Activated CD4-positive, alpha-beta memory T cell treated with anti-CD3 and anti-CD28 coated beads for 36 hours (primary cell): ENCODE measurements at regions of chr6 and their contacts with region 1.

Region 1: DNA sequence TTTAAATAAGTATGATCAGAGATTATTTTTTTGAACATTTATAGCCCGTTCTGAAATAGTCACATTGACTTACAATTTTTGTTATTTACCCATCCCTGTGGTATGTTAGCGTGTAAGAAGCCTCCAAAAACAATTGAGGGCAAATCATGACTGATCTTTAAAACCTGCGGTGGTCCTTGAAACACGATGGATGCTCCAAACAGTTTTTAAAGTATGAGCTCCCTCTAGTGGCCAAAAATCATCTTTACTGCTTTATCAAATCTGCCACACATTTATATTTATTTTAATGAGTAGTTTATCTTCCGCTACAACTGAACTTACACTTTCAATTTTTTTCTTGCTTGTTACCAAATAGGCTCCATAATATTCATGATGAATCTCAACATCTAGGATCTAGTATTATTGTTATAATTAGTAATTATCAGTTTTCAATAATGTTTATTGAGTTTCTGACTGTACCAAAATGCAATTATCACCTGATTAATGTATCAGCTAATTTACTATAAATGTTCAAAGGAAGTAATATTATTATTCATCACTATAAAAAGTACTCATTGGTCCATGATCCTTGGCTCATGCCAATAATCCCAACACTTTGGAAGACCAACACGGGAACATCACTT is 52.2 kb downstream of the MARCKS start:
- DNase-seq: no peak
- H3K4me3 Mint-ChIP-seq: no peak overlapping the region
- H3K27ac Mint-ChIP-seq: no peak overlapping the region
- H3K4me1 Mint-ChIP-seq: peaks cover 2% of the 10 kb centered on the region
- H3K27me3 Mint-ChIP-seq: peaks cover 8% of the 10 kb centered on the region

Region 2: GRCh38 chr6:112173221-112173804 is 1736.0 kb before region 1 on chr6:
- CTCF ChIA-PET with region 1: no interaction called
- POLR2A ChIA-PET with region 1: no interaction called
- intact Hi-C with region 1: loop called (anchors 5 kb)
- DNase-seq: no peak
- H3K4me3 Mint-ChIP-seq: no peak overlapping the region
- H3K27ac Mint-ChIP-seq: no peak overlapping the region
- H3K4me1 Mint-ChIP-seq: no peaks in the 10 kb centered on the region
- H3K27me3 Mint-ChIP-seq: peaks cover 23% of the 10 kb centered on the region

Region 3: GRCh38 chr6:112780498-112781096 is 1128.7 kb before region 1 on chr6:
- CTCF ChIA-PET with region 1: interaction called, 3 read pairs
- POLR2A ChIA-PET with region 1: no interaction called
- intact Hi-C with region 1: loop called (anchors 10 kb)
- DNase-seq: peak; percentile 20
- H3K4me3 Mint-ChIP-seq: no peak overlapping the region
- H3K27ac Mint-ChIP-seq: no peak overlapping the region
- H3K4me1 Mint-ChIP-seq: no peaks in the 10 kb centered on the region
- H3K27me3 Mint-ChIP-seq: no peaks in the 10 kb centered on the region

Region 4: DNA sequence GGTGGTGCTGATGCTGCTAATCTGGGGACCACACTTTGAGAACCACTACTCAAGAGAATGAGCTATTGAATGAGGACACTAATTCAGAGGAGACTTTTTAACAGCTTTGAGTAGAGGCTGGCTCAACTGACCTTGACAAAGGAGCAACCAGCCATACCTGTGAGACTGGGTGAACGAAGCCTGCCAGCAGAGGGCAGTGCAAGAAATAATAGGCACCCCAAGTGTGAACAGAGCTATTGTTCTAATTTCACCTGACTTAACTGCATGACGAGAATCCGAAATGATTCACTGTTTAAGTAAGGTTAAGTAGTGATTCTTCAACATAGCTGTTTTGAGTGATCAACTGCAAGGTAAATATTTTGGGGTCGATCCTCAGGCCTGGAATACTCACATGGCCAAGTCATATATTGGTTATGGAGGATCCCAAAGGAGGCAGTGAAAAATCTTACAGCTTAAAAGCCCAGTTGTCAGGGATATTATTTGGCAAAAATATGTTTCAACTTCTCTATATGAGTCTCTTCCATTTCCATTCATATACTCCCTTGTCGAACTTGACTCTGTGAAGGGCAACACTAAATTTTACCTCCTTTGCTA is 602.7 kb before region 1 on chr6:
- CTCF ChIA-PET with region 1: interaction called, 11 read pairs
- POLR2A ChIA-PET with region 1: no interaction called
- intact Hi-C with region 1: no loop called
- DNase-seq: peak; percentile 60
- H3K4me3 Mint-ChIP-seq: no peak overlapping the region
- H3K27ac Mint-ChIP-seq: no peak overlapping the region
- H3K4me1 Mint-ChIP-seq: no peaks in the 10 kb centered on the region
- H3K27me3 Mint-ChIP-seq: no peaks in the 10 kb centered on the region

Region 5: DNA sequence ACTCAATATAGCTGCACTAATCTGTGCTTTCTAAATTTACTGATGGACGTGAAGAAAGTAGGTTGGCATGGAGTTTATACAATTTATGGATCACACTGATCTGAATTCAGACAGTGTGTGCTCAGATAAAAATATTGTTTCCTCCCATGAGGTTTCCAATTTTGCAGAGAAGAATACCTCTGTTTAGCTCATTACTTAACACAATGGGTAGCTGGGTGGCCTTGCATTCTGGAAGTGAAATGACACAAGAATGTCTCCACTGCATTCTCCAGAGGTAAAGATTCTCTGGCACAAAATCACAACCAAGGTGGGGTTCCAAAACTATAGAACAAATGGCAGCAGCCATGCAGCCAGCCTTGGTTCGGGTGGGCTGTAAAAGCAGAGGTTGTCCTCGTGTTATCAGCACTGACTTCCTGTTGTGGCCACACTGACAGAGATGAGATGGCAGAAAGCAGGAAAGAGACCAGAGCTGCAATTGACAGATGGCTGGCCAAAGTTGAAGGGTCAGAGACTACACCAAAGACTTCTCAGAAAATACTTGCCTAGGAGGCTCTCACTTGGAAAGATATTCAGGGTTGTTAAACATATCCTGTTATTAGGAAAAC is 11.4 kb after region 1 on chr6:
- CTCF ChIA-PET with region 1: interaction called, 28 read pairs
- POLR2A ChIA-PET with region 1: no interaction called
- intact Hi-C with region 1: no loop called
- DNase-seq: peak; percentile 10
- H3K4me3 Mint-ChIP-seq: no peak overlapping the region
- H3K27ac Mint-ChIP-seq: no peak overlapping the region
- H3K4me1 Mint-ChIP-seq: peaks cover 10% of the 10 kb centered on the region
- H3K27me3 Mint-ChIP-seq: no peaks in the 10 kb centered on the region

Region 6: GRCh38 chr6:114064862-114065261 is 155.5 kb after region 1 on chr6:
- CTCF ChIA-PET with region 1: no interaction called
- POLR2A ChIA-PET with region 1: no interaction called
- intact Hi-C with region 1: no loop called
- DNase-seq: no peak
- H3K4me3 Mint-ChIP-seq: no peak overlapping the region
- H3K27ac Mint-ChIP-seq: no peak overlapping the region
- H3K4me1 Mint-ChIP-seq: no peaks in the 10 kb centered on the region
- H3K27me3 Mint-ChIP-seq: peaks cover 3% of the 10 kb centered on the region